ENCODE measurements at regions of chr1 and their contacts with region 1.

Region 1: DNA sequence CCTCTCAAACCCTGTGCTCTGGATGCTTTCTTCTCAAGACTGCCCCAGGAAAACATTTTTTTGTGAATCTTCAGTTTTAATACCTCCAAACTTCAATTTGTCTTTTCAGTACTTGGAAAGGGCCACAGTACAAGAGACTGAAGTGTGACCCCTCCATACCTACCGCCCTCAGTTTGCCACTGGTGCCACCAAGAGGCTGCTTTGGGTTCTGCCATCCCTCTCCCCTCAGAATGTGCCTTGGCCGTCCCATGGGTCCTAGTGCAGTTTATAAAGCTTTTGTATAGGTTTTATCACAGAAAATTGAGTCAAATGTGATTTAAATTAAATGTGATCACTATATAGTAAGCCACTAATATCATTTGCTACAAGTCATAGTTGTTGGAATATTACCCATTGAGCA is 60.8 kb upstream of the PGD start:
- DNase-seq: peak; percentile 27 to 64
- ATAC-seq: peak; percentile 73 to 92 (median 86)
- H3K4me3 ChIP-seq: no peak overlapping the region
- H3K27ac ChIP-seq: no peak overlapping the region
- H3K4me1 ChIP-seq: no peaks in the 10 kb centered on the region
- H3K27me3 ChIP-seq: no peaks in the 10 kb centered on the region
- CTCF ChIP-seq: peak; percentile 68

Region 2: GRCh38 chr1:10152709-10153284 is 185.2 kb before region 1 on chr1:
- intact Hi-C with region 1: loop called in 1 of 2 experiments (anchors 5 kb)
- DNase-seq: peak in 1 of 2 donors; percentile 37
- ATAC-seq: peak in 3 of 4 donors; percentile 20 to 36 (median 20)
- H3K4me3 ChIP-seq: no peak overlapping the region
- H3K27ac ChIP-seq: peak overlapping the region; percentile 86
- H3K4me1 ChIP-seq: peaks cover 17% of the 10 kb centered on the region
- H3K27me3 ChIP-seq: no peaks in the 10 kb centered on the region
- CTCF ChIP-seq: peak; percentile 39